ENCODE measurements at regions of chr6 and their contacts with region 1.

Region 1: DNA sequence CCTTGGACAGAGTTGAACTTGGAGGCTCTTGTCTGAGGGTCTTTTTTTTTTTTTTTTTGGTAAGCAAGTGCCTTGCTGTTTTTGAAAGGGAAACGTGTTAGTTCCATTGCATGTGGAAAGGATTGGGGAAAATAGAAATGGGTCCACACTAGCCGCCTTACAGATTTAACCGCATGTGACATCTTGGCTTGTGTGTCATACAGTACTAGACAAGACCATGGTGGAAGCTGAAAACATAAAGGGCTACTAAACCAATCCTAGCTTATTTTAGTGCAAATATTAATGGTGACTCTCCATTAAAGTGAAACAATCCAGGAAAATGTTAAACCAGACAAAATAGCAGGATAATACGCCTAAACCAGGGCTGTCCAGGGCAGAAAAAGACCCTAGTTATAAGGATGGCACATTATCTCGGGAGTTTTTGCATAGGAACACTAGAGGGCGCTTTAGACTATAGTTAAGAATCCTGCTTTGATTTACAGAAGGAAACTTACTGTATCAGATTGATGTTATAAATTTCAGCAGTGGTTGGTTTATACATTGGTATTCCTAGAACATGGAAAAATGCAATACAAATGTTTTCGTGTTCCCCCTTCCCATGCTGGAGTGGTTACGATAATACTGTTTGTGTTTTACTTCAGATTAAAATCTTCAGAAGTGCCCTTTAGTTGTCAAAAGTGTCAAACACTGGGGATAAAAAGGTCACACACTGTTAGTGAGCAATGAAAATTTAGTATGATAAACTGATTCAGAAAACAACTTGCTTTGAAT is 59.8 kb upstream of the DEK start:
- DNase-seq: peak in 1 of 2 donors; percentile 68
- H3K4me3 ChIP-seq: no peak overlapping the region
- H3K27ac ChIP-seq: no peak overlapping the region
- H3K4me1 ChIP-seq: peaks cover 0 to 19% (median 3%) of the 10 kb centered on the region in 4 donors
- H3K27me3 ChIP-seq: no peaks in the 10 kb centered on the region
- CTCF ChIP-seq: peak in 5 of 7 experiments; percentile 40 to 73 (median 58)
- EP300 ChIP-seq: no peak
- POLR2A ChIP-seq: no peak

Region 2: GRCh38 chr6:18506382-18507017 is 182.4 kb after region 1 on chr6:
- intact Hi-C with region 1: loop called (anchors 5 kb)
- DNase-seq: no peak
- H3K4me3 ChIP-seq: no peak overlapping the region
- H3K27ac ChIP-seq: no peak overlapping the region
- H3K4me1 ChIP-seq: peaks cover 0 to 17% (median 9%) of the 10 kb centered on the region in 4 donors
- H3K27me3 ChIP-seq: no peaks in the 10 kb centered on the region
- CTCF ChIP-seq: no peak
- EP300 ChIP-seq: no peak
- POLR2A ChIP-seq: no peak

Region 3: GRCh38 chr6:18667612-18668011 is 343.5 kb after region 1 on chr6:
- intact Hi-C with region 1: no loop called
- DNase-seq: no peak
- H3K4me3 ChIP-seq: no peak overlapping the region
- H3K27ac ChIP-seq: no peak overlapping the region
- H3K4me1 ChIP-seq: no peaks in the 10 kb centered on the region
- H3K27me3 ChIP-seq: no peaks in the 10 kb centered on the region
- CTCF ChIP-seq: no peak
- EP300 ChIP-seq: no peak
- POLR2A ChIP-seq: no peak

Measured in stomach (tissue), 19 donors.